Left colon (tissue), 2 donors: ENCODE measurements at regions of chr3 and their contacts with region 1.

Region 1: GRCh38 chr3:134956395-134956794 is 161.3 kb downstream of the EPHB1 start:
- DNase-seq: no peak
- ATAC-seq: no peak

Region 2: GRCh38 chr3:135034291-135034768 is 77.9 kb after region 1 on chr3:
- intact Hi-C with region 1: loop called in 1 of 2 experiments (anchors 10 kb)
- DNase-seq: no peak
- ATAC-seq: no peak

Region 3: GRCh38 chr3:135215516-135215915 is 259.1 kb after region 1 on chr3:
- intact Hi-C with region 1: no loop called
- DNase-seq: no peak
- ATAC-seq: no peak